Activated CD8-positive, alpha-beta T cell treated with anti-CD3 and anti-CD28 coated beads, Interleukin-2, amount 10 ng/mL, durations not matched to agents 7 days and 5 days (primary cell): ENCODE measurements at regions of chr17 and their contacts with region 1.

Region 1: GRCh38 chr17:47199627-47200324 is 9.4 kb upstream of the MYL4 start:
- DNase-seq: no peak
- ATAC-seq: no peak
- H3K4me3 Mint-ChIP-seq: no peak overlapping the region
- H3K27ac Mint-ChIP-seq: peak overlapping the region; percentile 83
- H3K4me1 Mint-ChIP-seq: peaks cover 32% of the 10 kb centered on the region
- H3K27me3 Mint-ChIP-seq: peaks cover 5% of the 10 kb centered on the region

Region 2: GRCh38 chr17:47188876-47189731 is 10.7 kb before region 1 on chr17 and contains the start of gene CDC27:
- CTCF ChIA-PET with region 1: interaction called, 12 read pairs
- POLR2A ChIA-PET with region 1: interaction called, 8 read pairs
- DNase-seq: peak; percentile 100
- ATAC-seq: peak; percentile 97
- H3K4me3 Mint-ChIP-seq: peak within 1 kb of the TSS; percentile 96
- H3K27ac Mint-ChIP-seq: peak within 1 kb of the TSS; percentile 96
- H3K4me1 Mint-ChIP-seq: peaks cover 67% of the 10 kb centered on the region
- H3K27me3 Mint-ChIP-seq: no peaks in the 10 kb centered on the region
- total RNA-seq, gene CDC27: 133 to 138 TPM